BJ (cell line): ENCODE measurements at regions of chr2 and their contacts with region 1.

Region 1: GRCh38 chr2:74778381-74779264 is 55.3 kb upstream of the HK2 start:
- DNase-seq: no peak
- H3K4me3 ChIP-seq: no peak overlapping the region
- H3K27me3 ChIP-seq: peaks cover 3% of the 10 kb centered on the region
- CTCF ChIP-seq: no peak

Region 2: DNA sequence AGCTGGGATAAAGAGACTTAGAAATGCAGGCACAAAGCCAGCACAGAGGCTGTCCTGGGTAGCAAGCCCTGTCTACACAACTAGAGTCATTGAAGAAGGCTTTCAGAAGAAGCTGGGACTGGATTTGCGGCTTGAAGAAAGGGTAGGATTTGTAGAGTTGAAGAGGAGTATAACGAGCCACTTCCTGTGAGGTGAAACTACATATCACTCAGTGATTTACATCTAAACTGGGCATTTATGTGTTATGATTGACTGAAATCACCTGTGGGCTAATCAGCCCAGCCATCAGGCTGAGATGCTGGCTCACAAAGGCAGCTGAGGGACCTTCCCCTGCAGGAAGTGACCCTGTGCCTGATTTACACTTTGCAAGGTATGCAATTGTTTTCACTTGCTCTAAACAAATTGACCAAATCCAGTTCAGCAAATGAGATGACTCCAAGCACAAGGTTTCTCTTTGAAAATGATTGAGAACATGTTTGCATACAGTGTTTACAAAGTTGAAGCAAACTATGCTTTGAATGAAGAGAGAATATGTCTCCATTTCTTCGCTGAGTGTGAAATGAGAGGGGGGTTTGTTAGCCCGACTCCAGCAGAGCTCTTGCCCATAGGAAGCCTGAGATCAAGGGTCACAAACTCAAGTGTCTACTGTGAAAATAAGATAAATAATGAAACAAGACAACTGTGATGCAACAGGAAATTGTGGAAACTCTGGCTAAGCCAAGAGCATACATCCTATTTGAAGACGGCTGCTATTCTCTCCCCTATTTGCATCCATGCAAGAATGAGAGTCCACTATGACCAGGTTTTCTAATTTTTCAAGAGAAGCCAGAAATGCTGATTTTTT is 14.0 kb before region 1 on chr2:
- CTCF ChIA-PET with region 1: interaction called, 8 read pairs
- POLR2A ChIA-PET with region 1: interaction called, 15 read pairs
- DNase-seq: no peak
- H3K4me3 ChIP-seq: no peak overlapping the region
- H3K27me3 ChIP-seq: no peaks in the 10 kb centered on the region
- CTCF ChIP-seq: no peak